ENCODE measurements at regions of chr2 and their contacts with region 1.

Region 1: DNA sequence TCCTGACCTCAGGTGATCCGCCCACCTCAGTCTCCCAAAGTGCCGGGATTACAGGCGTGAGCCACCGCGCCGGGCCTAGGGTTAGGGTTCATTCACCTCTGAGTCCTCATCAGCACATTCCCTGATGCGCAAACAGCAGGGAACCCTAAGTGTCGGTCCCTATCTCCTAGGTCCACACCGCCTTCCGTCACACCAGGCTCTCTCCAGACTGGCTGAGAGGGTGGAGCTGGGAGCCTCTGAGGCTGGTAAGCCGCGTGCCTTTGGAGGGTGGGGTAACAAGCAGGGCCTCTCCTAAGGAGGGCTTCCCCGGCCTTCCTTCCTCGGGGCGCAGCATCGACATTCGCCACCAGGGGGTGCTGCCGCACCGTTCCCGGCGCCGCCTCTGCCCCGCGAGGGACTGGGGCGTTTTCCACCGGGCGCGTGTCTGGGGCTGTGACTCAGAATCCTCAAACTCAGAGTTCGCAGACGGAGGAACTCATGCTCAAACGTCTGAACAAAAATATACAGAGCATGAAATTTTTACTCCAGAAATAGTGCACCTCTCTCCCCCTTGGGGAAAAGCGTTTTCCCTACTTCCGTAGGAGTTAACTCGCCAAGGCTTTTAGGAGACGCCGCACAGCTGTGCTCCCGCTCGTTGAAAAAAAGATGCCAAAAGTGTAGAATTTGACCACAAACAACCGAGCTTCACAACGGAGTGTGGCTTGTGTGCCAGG is 63.9 kb upstream of the ASAP2 start:
- DNase-seq: peak; percentile 85 to 97
- H3K4me3 ChIP-seq: peak overlapping the region; percentile 23; the same call in 1 of the 2 replicates
- H3K27ac ChIP-seq: peak overlapping the region; percentile 45
- H3K4me1 ChIP-seq: peaks cover 60% of the 10 kb centered on the region
- H3K27me3 ChIP-seq: no peaks in the 10 kb centered on the region
- CTCF ChIP-seq: peak; percentile 99

Region 2: DNA sequence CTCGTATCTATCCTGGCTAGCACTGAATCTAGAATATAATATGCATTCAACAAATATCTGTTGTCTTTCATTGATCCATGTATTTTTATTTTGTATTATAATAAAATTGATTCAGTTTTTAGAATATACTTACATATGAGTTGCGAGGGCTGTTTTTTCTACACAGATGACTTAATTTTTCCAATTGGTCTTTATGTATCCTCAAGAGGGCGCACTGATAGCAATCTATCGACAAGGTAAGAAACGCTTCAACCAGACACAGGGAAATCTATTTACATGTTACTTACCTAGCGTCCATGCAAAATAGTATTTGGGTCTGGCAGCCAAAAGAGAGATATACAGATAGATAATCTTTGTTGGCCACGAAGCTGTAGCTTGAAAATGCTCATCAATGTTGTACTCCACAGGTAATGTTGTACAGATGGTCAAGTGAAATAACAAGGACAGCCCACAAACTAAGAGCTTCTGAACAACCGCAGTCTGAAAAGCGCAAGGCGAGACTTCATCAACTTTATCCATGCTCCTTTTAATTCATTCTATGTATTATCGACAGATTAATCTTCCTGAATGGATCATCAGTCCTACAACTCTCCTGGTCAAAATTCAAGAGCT is 269.8 kb before region 1 on chr2:
- CTCF ChIA-PET with region 1: interaction called, 17 read pairs
- POLR2A ChIA-PET with region 1: no interaction called
- intact Hi-C with region 1: loop called (anchors 1 kb)
- DNase-seq: peak; percentile 2 to 56
- H3K4me3 ChIP-seq: no peak overlapping the region
- H3K27ac ChIP-seq: no peak overlapping the region
- H3K4me1 ChIP-seq: no peaks in the 10 kb centered on the region
- H3K27me3 ChIP-seq: no peaks in the 10 kb centered on the region
- CTCF ChIP-seq: peak; percentile 82

Region 3: DNA sequence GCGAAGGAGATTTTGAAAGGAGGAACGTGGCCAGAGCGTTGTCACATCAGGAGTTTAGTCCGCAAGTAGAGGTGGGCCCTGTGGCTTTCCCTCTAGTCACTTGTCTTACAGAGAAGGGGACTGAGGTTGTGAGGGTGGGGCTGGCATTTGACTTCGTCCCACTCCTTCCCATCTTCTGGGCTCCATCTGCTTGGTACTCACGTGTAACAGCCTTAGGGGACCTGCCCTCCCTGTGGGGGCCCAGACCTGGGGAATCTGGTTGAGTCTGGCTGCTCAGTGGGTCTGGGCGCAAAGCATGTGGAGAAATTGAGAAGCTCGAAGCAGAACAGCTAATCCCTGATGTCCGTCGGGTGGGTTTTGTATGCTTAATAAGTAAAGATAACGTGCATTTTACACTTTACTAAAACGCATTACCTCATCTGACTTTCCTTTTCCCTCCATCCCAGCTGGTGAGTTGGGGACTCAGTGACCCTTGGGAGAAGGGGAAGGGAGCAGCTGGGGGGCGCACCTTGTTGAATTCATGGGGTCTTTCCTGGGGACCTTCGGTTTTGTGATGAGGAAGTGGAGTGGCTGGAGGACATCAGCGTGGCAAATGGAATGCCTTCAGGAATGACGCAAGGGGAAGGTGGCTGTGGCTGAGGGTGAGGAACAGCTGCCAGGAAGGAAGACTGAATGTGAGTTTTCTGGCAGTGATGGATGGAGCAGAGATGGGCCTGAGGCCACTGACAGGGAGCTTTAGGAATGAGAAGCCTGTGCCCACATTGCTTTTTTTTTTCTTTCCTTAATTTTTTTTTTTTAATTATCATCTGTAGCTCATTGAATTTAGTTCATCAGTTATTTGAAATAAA is 108.7 kb after region 1 on chr2:
- CTCF ChIA-PET with region 1: interaction called, 7 read pairs
- POLR2A ChIA-PET with region 1: no interaction called
- intact Hi-C with region 1: loop called (anchors 5 kb)
- DNase-seq: peak; percentile 81 to 94
- H3K4me3 ChIP-seq: peak overlapping the region; percentile 9; the same call in 1 of the 2 replicates
- H3K27ac ChIP-seq: peak overlapping the region; percentile 67
- H3K4me1 ChIP-seq: peaks cover 59% of the 10 kb centered on the region
- H3K27me3 ChIP-seq: no peaks in the 10 kb centered on the region
- CTCF ChIP-seq: no peak

Region 4: GRCh38 chr2:9380702-9381628 is 238.3 kb after region 1 on chr2:
- CTCF ChIA-PET with region 1: no interaction called
- POLR2A ChIA-PET with region 1: no interaction called
- intact Hi-C with region 1: loop called (anchors 2 kb)
- DNase-seq: peak; percentile 68 to 94
- H3K4me3 ChIP-seq: peak overlapping the region; percentile 12; the same call in 1 of the 2 replicates
- H3K27ac ChIP-seq: peak overlapping the region; percentile 93
- H3K4me1 ChIP-seq: peaks cover 77% of the 10 kb centered on the region
- H3K27me3 ChIP-seq: no peaks in the 10 kb centered on the region
- CTCF ChIP-seq: no peak